ENCODE measurements at regions of chr11 and their contacts with region 1.

Region 1: DNA sequence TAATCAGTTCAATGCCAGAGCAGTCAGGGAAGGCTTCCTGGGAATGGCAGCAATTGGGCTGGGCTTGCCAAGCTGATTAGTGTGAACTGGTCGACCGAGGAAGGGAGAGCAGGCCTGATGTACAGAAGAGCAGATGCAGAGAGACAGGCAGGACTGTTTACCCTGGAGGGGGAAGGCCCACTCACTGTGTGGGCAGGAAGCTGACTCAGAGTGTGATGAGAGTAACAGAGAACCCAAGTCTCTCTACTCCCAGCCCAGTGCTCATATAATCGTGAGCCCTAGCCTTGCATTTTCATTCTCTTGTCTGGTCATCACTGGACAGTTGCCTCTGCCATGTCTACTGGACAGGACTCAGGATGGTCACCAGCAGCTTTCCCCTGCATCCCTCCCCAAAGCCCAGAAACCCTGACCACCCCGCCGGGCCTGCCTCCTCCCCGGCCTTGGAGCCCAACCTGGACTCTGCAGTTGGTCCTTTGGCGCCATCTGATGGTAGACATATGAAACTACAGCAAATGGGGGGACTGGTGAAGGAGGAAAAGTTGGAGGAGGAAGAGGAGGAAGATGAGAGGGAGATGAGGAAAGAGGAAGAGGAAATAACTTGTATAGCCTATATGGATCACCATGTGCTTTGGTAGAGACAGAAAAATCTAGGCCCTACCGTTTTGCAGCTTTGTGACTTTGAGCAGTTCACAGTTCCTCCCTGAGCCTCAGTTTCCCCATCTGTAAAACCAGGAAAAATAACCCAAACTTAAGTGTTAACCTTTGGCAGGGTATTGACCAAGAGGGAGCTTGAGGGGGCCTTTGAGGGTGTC is 43.4 kb upstream of the PRDM11 start:
- DNase-seq: peak; percentile 57 to 62
- ATAC-seq: peak; percentile 34 to 87 (median 68)
- H3K4me3 ChIP-seq: no peak overlapping the region
- H3K27ac ChIP-seq: peak overlapping the region in 4 of 10 donors; percentile 17 to 69 (median 30)
- H3K4me1 ChIP-seq: peaks cover 0 to 25% (median 11%) of the 10 kb centered on the region in 9 donors
- H3K27me3 ChIP-seq: peaks cover 0 to 7% (median 0%) of the 10 kb centered on the region in 7 donors
- CTCF ChIP-seq: peak; percentile 87 to 98 (median 97)

Region 2: DNA sequence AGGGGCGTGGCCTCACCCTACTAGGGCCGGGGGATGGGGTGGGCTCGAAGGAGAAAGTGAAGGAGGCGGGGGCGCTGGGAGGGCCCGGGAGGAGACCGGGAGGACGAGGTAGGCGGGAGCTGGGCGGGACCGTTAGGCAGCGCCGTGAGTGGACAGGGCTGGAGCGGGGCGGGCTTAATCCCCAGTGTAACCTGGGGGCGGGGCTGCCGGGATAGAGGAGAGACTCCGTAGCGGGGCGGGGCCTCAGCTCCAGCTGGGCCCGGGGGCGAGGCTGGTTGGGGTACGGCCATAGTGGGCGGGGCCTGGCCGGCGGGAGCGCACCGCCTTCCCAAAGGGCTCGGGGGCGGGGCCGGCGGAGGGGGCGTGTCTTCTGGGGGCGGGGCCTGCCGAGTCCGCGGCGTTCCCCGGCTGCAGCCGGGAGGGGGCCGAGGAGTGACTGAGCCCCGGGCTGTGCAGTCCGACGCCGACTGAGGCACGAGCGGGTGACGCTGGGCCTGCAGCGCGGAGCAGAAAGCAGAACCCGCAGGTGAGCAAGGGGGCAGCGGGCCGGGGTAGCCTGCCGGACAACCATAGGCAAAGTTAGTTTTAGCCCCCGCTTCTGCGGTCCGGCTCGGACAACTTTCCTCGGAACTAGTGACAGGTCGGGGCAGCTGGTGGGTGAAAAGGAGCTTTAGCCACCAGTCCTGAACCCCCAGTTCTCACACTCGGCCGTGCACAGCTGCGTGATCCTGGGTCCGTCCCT is 537.6 kb before region 1 on chr11 and contains the start of gene CD82:
- intact Hi-C with region 1: loop called in 1 of 10 experiments (anchors 10 kb)
- DNase-seq: peak; percentile 100
- ATAC-seq: peak; percentile 95 to 98 (median 96)
- H3K4me3 ChIP-seq: peak within 1 kb of the TSS; percentile 48 to 80 (median 64)
- H3K27ac ChIP-seq: peak within 1 kb of the TSS; percentile 91 to 99 (median 96)
- H3K4me1 ChIP-seq: peaks cover 15 to 70% (median 53%) of the 10 kb centered on the region in 9 donors
- H3K27me3 ChIP-seq: no peaks in the 10 kb centered on the region
- CTCF ChIP-seq: peak; percentile 7 to 58 (median 41)
- total RNA-seq, gene CD82: 25.8 to 66.7 (median 35.2) TPM

Region 3: GRCh38 chr11:44621140-44621681 is 481.8 kb before region 1 on chr11:
- intact Hi-C with region 1: loop called in 6 of 10 experiments (anchors 5 to 10 kb)
- DNase-seq: peak; percentile 76 to 83
- ATAC-seq: peak; percentile 62 to 82 (median 70)
- H3K4me3 ChIP-seq: peak overlapping the region in 6 of 10 donors; percentile 10 to 39 (median 33)
- H3K27ac ChIP-seq: no peak overlapping the region
- H3K4me1 ChIP-seq: peaks cover 12 to 54% (median 37%) of the 10 kb centered on the region in 9 donors
- H3K27me3 ChIP-seq: no peaks in the 10 kb centered on the region
- CTCF ChIP-seq: peak; percentile 97 to 99 (median 98)

Region 4: GRCh38 chr11:44927174-44927661 is 175.8 kb before region 1 on chr11:
- intact Hi-C with region 1: loop called in 1 of 10 experiments (anchors 2 kb)
- DNase-seq: peak; percentile 64 to 68
- ATAC-seq: peak in 7 of 8 donors; percentile 25 to 67 (median 52)
- H3K4me3 ChIP-seq: no peak overlapping the region
- H3K27ac ChIP-seq: no peak overlapping the region
- H3K4me1 ChIP-seq: peaks cover 5 to 35% (median 14%) of the 10 kb centered on the region in 9 donors
- H3K27me3 ChIP-seq: no peaks in the 10 kb centered on the region
- CTCF ChIP-seq: peak; percentile 64 to 93 (median 88)

Region 5: GRCh38 chr11:44936525-44936924 is 166.5 kb before region 1 on chr11:
- intact Hi-C with region 1: loop called (anchors 1 to 2 kb)
- DNase-seq: peak; percentile 79 to 82
- ATAC-seq: peak; percentile 16 to 67 (median 56)
- H3K4me3 ChIP-seq: no peak overlapping the region
- H3K27ac ChIP-seq: no peak overlapping the region
- H3K4me1 ChIP-seq: peaks cover 20 to 52% (median 34%) of the 10 kb centered on the region in 9 donors
- H3K27me3 ChIP-seq: no peaks in the 10 kb centered on the region
- CTCF ChIP-seq: peak in 8 of 9 donors; percentile 92 to 97 (median 95)

Region 6: DNA sequence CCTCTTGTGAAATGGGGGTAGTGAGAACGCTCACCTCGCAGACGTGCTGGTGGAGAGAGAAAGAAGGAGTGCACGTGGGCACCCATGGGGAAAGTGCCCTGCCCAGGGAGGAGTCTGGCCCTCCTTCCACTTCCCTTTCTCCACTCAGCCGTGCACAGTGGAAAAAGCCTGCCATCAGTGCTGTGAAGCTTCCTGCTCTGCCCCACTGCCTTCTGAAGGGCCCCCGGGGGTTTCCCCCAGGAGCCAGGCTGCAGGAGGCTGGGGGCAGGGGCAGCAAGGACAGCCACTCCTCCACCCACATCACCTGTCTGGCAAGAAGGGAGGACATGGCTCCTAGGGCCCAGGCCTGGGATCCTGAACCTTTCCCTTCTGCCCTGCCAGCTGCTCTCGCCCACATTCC is 159.9 kb before region 1 on chr11:
- intact Hi-C with region 1: loop called in 1 of 10 experiments (anchors 2 kb)
- DNase-seq: no peak
- ATAC-seq: no peak
- H3K4me3 ChIP-seq: no peak overlapping the region
- H3K27ac ChIP-seq: peak overlapping the region in 3 of 10 donors; percentile 34 to 43 (median 41)
- H3K4me1 ChIP-seq: peaks cover 29 to 96% (median 77%) of the 10 kb centered on the region in 9 donors
- H3K27me3 ChIP-seq: no peaks in the 10 kb centered on the region
- CTCF ChIP-seq: no peak

Region 7: DNA sequence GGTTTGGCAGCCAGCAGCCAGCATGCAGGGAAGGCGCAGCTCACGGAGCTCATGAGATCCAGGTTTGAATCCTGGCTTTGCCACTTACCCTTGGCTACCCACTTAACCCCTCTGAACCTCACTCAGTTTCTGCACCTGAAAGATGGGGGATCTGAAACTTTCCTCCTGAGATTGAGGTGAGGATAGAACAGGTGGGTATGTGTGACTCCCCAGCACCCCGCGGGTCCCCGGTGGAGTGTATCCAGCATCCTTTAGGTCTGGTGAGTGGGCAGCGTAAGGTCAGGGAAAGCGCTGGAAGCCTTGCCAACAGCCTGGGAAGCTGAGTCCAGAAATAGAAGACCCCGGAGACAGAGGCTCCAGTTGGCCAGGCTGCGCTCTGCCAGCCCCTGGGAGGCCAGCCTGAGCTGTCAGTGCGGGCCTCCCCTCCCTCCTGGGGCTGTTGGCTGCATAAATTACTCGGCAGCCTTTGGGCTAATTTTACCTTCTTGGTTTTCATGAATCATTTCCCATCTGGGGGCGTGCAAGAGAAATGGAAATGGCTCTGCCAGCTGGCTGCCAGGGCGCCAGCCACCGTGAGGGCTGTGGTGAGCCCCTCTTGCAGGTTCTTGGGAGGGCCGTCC is 61.0 kb after region 1 on chr11:
- intact Hi-C with region 1: no loop called
- DNase-seq: no peak
- ATAC-seq: peak in 7 of 8 donors; percentile 26 to 76 (median 41)
- H3K4me3 ChIP-seq: no peak overlapping the region
- H3K27ac ChIP-seq: peak overlapping the region in 6 of 10 donors; percentile 13 to 43 (median 26)
- H3K4me1 ChIP-seq: peaks cover 14 to 76% (median 50%) of the 10 kb centered on the region in 9 donors
- H3K27me3 ChIP-seq: no peaks in the 10 kb centered on the region
- CTCF ChIP-seq: no peak

Region 8: GRCh38 chr11:45332276-45332934 is 229.4 kb after region 1 on chr11:
- intact Hi-C with region 1: loop called in 1 of 10 experiments (anchors 5 kb)
- DNase-seq: peak in 1 of 2 donors; percentile 45
- ATAC-seq: peak; percentile 39 to 81 (median 72)
- H3K4me3 ChIP-seq: peak overlapping the region in 7 of 10 donors; percentile 17 to 45 (median 40)
- H3K27ac ChIP-seq: peak overlapping the region in 8 of 10 donors; percentile 51 to 78 (median 69)
- H3K4me1 ChIP-seq: peaks cover 0 to 21% (median 8%) of the 10 kb centered on the region in 9 donors
- H3K27me3 ChIP-seq: peaks cover 0 to 5% (median 0%) of the 10 kb centered on the region in 7 donors
- CTCF ChIP-seq: peak; percentile 77 to 91 (median 86)

Measured in heart right ventricle (tissue), 16 donors.